ENCODE measurements at regions of chr15 and their contacts with region 1.

Region 1: GRCh38 chr15:75327005-75327404 is 8.9 kb upstream of the COMMD4 start:
- DNase-seq: no peak
- ATAC-seq: no peak
- H3K4me3 ChIP-seq: no peak overlapping the region
- H3K27ac ChIP-seq: no peak overlapping the region
- H3K4me1 ChIP-seq: no peaks in the 10 kb centered on the region
- H3K27me3 ChIP-seq: no peaks in the 10 kb centered on the region
- CTCF ChIP-seq: no peak
- POLR2A ChIP-seq: no peak

Region 2: DNA sequence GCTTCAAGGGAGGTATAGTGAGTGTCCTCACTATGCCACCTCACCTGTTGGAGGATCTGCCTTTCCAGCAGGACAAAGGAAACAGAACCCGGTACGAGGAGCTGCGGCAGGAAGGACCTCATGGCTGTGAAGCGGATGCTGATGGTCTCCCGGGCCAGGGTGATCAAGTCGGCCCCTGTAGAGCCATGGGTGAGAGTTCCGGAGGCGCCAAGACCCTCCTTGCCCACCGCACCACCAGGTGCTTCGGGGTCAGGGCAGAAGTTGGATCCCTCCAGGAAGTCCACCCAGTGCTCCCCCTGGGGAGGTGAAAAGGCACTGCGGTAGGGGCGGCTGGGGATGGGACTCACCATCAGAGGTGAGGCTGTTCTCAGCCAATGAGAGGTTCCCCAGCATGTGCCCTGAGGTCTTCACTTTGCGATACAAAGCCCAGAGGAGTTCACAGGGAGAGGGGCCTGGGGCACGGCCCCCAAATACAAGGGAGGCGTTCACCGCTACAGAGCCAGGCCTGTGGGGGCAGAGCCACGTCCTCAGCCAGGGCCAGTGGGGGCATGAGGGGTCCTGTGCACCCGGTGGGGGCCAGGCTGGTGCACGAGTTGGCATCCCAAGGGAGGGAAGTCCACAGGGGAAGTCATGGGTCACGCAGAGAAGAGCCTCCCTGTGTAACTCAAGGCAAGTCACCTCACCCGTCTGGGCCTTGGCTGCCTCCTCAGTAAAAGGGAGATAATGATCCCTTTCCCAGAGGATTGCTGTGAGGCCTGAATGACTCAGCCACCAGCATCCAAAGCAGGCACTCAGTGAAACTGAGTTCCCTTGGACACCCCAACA is 97.6 kb before region 1 on chr15:
- in situ Hi-C with region 1: no loop called
- intact Hi-C with region 1: loop called (anchors 10 kb)
- DNase-seq: no peak
- ATAC-seq: no peak
- H3K4me3 ChIP-seq: no peak overlapping the region
- H3K27ac ChIP-seq: no peak overlapping the region
- H3K4me1 ChIP-seq: no peaks in the 10 kb centered on the region
- H3K27me3 ChIP-seq: peaks cover 0 to 2% (median 0%) of the 10 kb centered on the region in 3 donors
- CTCF ChIP-seq: no peak
- POLR2A ChIP-seq: no peak

Region 3: GRCh38 chr15:75313116-75313845 is 13.7 kb before region 1 on chr15:
- in situ Hi-C with region 1: no loop called
- intact Hi-C with region 1: loop called (anchors 1 kb)
- DNase-seq: no peak
- ATAC-seq: no peak
- H3K4me3 ChIP-seq: no peak overlapping the region
- H3K27ac ChIP-seq: no peak overlapping the region
- H3K4me1 ChIP-seq: no peaks in the 10 kb centered on the region
- H3K27me3 ChIP-seq: peaks cover 1 to 6% (median 4%) of the 10 kb centered on the region in 3 donors
- CTCF ChIP-seq: no peak
- POLR2A ChIP-seq: no peak